Sigmoid colon (tissue), 7 donors: ENCODE measurements at regions of chr1 and their contacts with region 1.

Region 1: GRCh38 chr1:232142403-232143314 is 487.3 kb downstream of the SIPA1L2 start:
- DNase-seq: peak; percentile 92
- H3K4me3 ChIP-seq: no peak overlapping the region
- H3K27ac ChIP-seq: peak overlapping the region; percentile 68 to 79 (median 76)
- H3K4me1 ChIP-seq: peaks cover 0 to 19% (median 13%) of the 10 kb centered on the region in 4 donors
- H3K27me3 ChIP-seq: no peaks in the 10 kb centered on the region
- CTCF ChIP-seq: no peak
- EP300 ChIP-seq: peak in 3 of 4 donors; percentile 22 to 78 (median 61)
- POLR2A ChIP-seq: no peak

Region 2: GRCh38 chr1:232012773-232013386 is 129.8 kb before region 1 on chr1:
- intact Hi-C with region 1: loop called (anchors 10 kb)
- DNase-seq: peak; percentile 87
- H3K4me3 ChIP-seq: peak overlapping the region in 2 of 4 donors; percentile 2 to 23
- H3K27ac ChIP-seq: peak overlapping the region; percentile 57 to 78 (median 72)
- H3K4me1 ChIP-seq: peaks cover 0 to 52% (median 41%) of the 10 kb centered on the region in 4 donors
- H3K27me3 ChIP-seq: no peaks in the 10 kb centered on the region
- CTCF ChIP-seq: no peak
- EP300 ChIP-seq: peak in 1 of 4 donors; percentile 6
- POLR2A ChIP-seq: no peak